MCF 10A (cell line): ENCODE measurements at regions of chr1 and their contacts with region 1.

Region 1: GRCh38 chr1:8560611-8561544 is 243.0 kb downstream of the SLC45A1 start:
- DNase-seq: peak; percentile 69
- H3K4me3 Mint-ChIP-seq: no peak overlapping the region
- H3K27ac Mint-ChIP-seq: no peak overlapping the region
- H3K4me1 Mint-ChIP-seq: peaks cover 6% of the 10 kb centered on the region
- H3K27me3 Mint-ChIP-seq: no peaks in the 10 kb centered on the region
- CTCF ChIP-seq: peak; percentile 84

Region 2: GRCh38 chr1:8571200-8571984 is 10.5 kb after region 1 on chr1:
- CTCF ChIA-PET with region 1: interaction called, 34 read pairs
- POLR2A ChIA-PET with region 1: interaction called, 4 read pairs
- intact Hi-C with region 1: no loop called
- DNase-seq: peak; percentile 33
- H3K4me3 Mint-ChIP-seq: no peak overlapping the region
- H3K27ac Mint-ChIP-seq: no peak overlapping the region
- H3K4me1 Mint-ChIP-seq: peaks cover 11% of the 10 kb centered on the region
- H3K27me3 Mint-ChIP-seq: no peaks in the 10 kb centered on the region
- CTCF ChIP-seq: peak; percentile 52

Region 3: GRCh38 chr1:8604041-8604945 is 43.4 kb after region 1 on chr1:
- CTCF ChIA-PET with region 1: interaction called, 10 read pairs
- POLR2A ChIA-PET with region 1: no interaction called
- intact Hi-C with region 1: no loop called
- DNase-seq: no peak
- H3K4me3 Mint-ChIP-seq: no peak overlapping the region
- H3K27ac Mint-ChIP-seq: no peak overlapping the region
- H3K4me1 Mint-ChIP-seq: no peaks in the 10 kb centered on the region
- H3K27me3 Mint-ChIP-seq: no peaks in the 10 kb centered on the region
- CTCF ChIP-seq: no peak

Region 4: DNA sequence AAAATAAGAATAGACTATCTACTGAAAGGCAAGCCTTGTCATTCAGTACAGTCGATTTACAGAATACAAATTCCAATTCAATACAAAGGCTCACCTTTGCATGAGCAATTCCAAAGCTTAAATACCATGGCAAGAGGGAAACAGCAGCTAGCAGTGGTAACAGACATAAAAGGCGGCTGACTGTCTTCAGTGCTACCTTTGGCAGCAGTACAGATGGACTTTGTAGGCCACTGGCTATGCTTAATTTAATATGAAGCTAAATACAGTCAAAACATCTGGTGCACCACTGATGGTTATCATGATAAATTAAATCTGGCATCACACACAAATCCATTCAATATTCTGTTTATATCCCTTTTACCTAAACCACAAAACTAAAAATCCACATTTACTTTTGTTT is 194.1 kb after region 1 on chr1:
- CTCF ChIA-PET with region 1: no interaction called
- POLR2A ChIA-PET with region 1: no interaction called
- intact Hi-C with region 1: no loop called
- DNase-seq: no peak
- H3K4me3 Mint-ChIP-seq: no peak overlapping the region
- H3K27ac Mint-ChIP-seq: no peak overlapping the region
- H3K4me1 Mint-ChIP-seq: no peaks in the 10 kb centered on the region
- H3K27me3 Mint-ChIP-seq: no peaks in the 10 kb centered on the region
- CTCF ChIP-seq: no peak

Region 5: GRCh38 chr1:8789314-8790214 is 228.7 kb after region 1 on chr1:
- CTCF ChIA-PET with region 1: no interaction called
- POLR2A ChIA-PET with region 1: no interaction called
- intact Hi-C with region 1: no loop called
- DNase-seq: no peak
- H3K4me3 Mint-ChIP-seq: no peak overlapping the region
- H3K27ac Mint-ChIP-seq: peak overlapping the region; percentile 33
- H3K4me1 Mint-ChIP-seq: peaks cover 20% of the 10 kb centered on the region
- H3K27me3 Mint-ChIP-seq: no peaks in the 10 kb centered on the region
- CTCF ChIP-seq: no peak